ENCODE measurements at regions of chr9 and their contacts with region 1.

Region 1: DNA sequence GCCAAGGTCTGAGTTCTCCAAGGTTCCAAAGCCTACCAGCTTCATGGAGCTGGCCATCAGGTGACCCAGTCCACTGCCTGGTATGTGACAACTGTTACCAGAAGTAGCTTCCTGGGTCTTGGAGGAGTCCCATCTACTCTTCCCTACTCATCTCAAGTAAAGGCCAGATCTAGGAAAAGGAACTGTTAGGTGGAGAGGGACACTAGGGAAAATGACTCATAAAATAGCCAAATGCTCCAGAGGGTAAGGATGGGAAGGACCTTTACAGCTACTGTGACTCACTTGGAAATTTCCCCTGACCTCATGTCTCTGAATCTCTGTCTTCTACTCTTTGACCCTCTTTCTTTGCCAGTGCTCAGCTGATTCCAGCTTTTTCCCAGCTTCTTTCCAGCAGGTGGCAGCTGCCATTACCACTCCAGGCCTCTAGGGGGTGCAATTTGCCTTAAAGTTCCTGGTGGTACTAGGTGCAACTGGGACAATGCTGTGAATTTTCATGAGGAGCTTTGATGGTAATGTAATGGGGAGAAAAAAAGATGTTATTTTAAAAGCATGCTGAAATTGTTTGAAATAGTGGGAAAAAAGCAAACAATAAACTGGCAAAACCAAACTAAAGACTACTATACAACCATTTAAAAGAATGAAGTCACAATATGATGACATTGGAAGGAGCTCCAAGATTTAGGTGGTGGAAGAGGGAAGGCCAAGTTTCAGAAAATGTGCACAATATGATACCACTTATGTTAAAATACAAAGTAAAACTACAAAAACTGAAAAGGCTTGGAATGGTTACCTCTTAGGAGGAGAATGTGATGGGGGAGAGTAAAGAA is 27.1 kb upstream of the MYORG start:
- DNase-seq: peak; percentile 86
- H3K4me3 Mint-ChIP-seq: no peak overlapping the region
- H3K27ac Mint-ChIP-seq: no peak overlapping the region
- H3K4me1 Mint-ChIP-seq: no peaks in the 10 kb centered on the region
- H3K27me3 Mint-ChIP-seq: no peaks in the 10 kb centered on the region

Region 2: GRCh38 chr9:34500623-34501267 is 97.0 kb after region 1 on chr9:
- intact Hi-C with region 1: loop called (anchors 1 kb)
- DNase-seq: peak; percentile 93
- H3K4me3 Mint-ChIP-seq: no peak overlapping the region
- H3K27ac Mint-ChIP-seq: no peak overlapping the region
- H3K4me1 Mint-ChIP-seq: peaks cover 6% of the 10 kb centered on the region
- H3K27me3 Mint-ChIP-seq: peaks cover 24% of the 10 kb centered on the region

Measured in activated CD4-positive, alpha-beta T cell treated with anti-CD3 and anti-CD28 coated beads, Interleukin-2, amount 10 ng/mL, durations not matched to agents 24 days and 14 days (primary cell).